MCF 10A (cell line): ENCODE measurements at regions of chr5 and their contacts with region 1.

Region 1: GRCh38 chr5:138503487-138504270 is 38.4 kb downstream of the EGR1 start:
- DNase-seq: peak; percentile 86
- H3K4me3 Mint-ChIP-seq: no peak overlapping the region
- H3K27ac Mint-ChIP-seq: no peak overlapping the region
- H3K4me1 Mint-ChIP-seq: peaks cover 58% of the 10 kb centered on the region
- H3K27me3 Mint-ChIP-seq: no peaks in the 10 kb centered on the region
- CTCF ChIP-seq: peak; percentile 79

Region 2: GRCh38 chr5:137870647-137871339 is 632.9 kb before region 1 on chr5:
- CTCF ChIA-PET with region 1: no interaction called
- POLR2A ChIA-PET with region 1: no interaction called
- intact Hi-C with region 1: no loop called
- DNase-seq: no peak
- H3K4me3 Mint-ChIP-seq: no peak overlapping the region
- H3K27ac Mint-ChIP-seq: no peak overlapping the region
- H3K4me1 Mint-ChIP-seq: no peaks in the 10 kb centered on the region
- H3K27me3 Mint-ChIP-seq: no peaks in the 10 kb centered on the region
- CTCF ChIP-seq: no peak

Region 3: DNA sequence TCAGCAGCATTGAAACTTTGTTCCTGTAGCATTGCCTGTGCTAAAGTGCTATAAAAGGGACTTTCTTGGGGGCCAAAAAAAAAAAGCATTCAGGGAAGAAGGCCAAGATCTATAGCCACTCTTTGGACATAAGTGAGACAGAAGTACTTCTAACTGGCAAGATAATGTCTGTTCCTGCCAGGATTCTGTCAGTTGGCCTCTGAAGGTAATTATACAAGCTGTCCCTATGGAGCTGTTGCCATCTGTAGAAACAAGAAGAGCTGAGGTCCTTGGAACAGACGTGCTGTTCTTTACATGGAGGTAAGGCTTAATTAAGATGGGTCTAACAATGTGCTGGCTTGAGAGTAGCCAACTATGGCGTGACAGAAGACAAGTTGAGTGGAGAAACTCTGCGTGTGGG is 315.1 kb before region 1 on chr5:
- CTCF ChIA-PET with region 1: no interaction called
- POLR2A ChIA-PET with region 1: no interaction called
- intact Hi-C with region 1: no loop called
- DNase-seq: no peak
- H3K4me3 Mint-ChIP-seq: no peak overlapping the region
- H3K27ac Mint-ChIP-seq: no peak overlapping the region
- H3K4me1 Mint-ChIP-seq: no peaks in the 10 kb centered on the region
- H3K27me3 Mint-ChIP-seq: no peaks in the 10 kb centered on the region
- CTCF ChIP-seq: no peak

Region 4: DNA sequence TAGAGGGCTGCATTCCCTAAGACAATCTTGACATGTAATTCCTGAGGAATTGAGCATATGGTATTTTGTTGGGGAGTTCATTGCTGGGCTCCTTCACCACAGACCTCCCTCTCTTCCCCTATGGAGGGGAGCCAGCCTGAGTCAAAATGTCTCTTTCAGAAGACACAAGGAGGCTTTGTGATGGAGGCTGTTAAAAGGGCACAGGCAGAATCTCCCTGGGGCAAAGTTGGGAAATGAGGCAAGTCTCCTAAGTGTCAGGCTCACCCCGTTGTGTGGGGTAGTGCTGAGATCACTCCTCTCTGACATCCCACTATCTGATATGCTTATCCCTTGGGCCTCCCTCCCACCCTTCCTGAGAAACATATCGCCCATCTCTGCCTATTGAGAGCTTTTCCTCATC is 259.9 kb before region 1 on chr5:
- CTCF ChIA-PET with region 1: no interaction called
- POLR2A ChIA-PET with region 1: no interaction called
- intact Hi-C with region 1: no loop called
- DNase-seq: no peak
- H3K4me3 Mint-ChIP-seq: no peak overlapping the region
- H3K27ac Mint-ChIP-seq: no peak overlapping the region
- H3K4me1 Mint-ChIP-seq: no peaks in the 10 kb centered on the region
- H3K27me3 Mint-ChIP-seq: peaks cover 61% of the 10 kb centered on the region
- CTCF ChIP-seq: no peak

Region 5: GRCh38 chr5:138464008-138464387 is 39.7 kb before region 1 on chr5:
- CTCF ChIA-PET with region 1: interaction called, 268 read pairs
- POLR2A ChIA-PET with region 1: interaction called, 626 read pairs
- intact Hi-C with region 1: loop called (anchors 1 kb)
- DNase-seq: peak; percentile 98
- H3K4me3 Mint-ChIP-seq: peak overlapping the region; percentile 78
- H3K27ac Mint-ChIP-seq: peak overlapping the region; percentile 93
- H3K4me1 Mint-ChIP-seq: peaks cover 45% of the 10 kb centered on the region
- H3K27me3 Mint-ChIP-seq: peaks cover 20% of the 10 kb centered on the region
- CTCF ChIP-seq: peak; percentile 97

Region 6: DNA sequence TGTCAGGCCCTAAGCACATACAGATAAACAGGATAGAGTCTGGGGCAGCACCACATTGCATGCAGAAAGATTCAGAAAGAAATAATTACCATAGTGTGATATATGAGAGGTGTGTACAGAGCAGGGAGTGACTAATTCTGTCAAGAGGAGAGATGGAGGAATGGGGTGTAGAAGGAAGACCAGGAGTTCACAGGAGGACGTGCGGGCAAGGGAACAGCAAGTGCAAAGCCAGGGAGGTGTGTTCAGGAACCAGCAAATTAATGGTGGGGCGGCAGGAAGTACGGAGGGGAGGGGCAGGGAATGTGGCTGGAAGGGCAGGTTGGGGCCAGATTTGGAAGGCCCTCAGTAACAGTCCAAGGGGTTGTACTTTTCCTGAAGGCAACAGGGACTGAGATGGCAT is 21.0 kb before region 1 on chr5:
- CTCF ChIA-PET with region 1: interaction called, 14 read pairs
- POLR2A ChIA-PET with region 1: interaction called, 6 read pairs
- intact Hi-C with region 1: no loop called
- DNase-seq: peak; percentile 59
- H3K4me3 Mint-ChIP-seq: no peak overlapping the region
- H3K27ac Mint-ChIP-seq: peak overlapping the region; percentile 2
- H3K4me1 Mint-ChIP-seq: peaks cover 17% of the 10 kb centered on the region
- H3K27me3 Mint-ChIP-seq: no peaks in the 10 kb centered on the region
- CTCF ChIP-seq: no peak

Region 7: DNA sequence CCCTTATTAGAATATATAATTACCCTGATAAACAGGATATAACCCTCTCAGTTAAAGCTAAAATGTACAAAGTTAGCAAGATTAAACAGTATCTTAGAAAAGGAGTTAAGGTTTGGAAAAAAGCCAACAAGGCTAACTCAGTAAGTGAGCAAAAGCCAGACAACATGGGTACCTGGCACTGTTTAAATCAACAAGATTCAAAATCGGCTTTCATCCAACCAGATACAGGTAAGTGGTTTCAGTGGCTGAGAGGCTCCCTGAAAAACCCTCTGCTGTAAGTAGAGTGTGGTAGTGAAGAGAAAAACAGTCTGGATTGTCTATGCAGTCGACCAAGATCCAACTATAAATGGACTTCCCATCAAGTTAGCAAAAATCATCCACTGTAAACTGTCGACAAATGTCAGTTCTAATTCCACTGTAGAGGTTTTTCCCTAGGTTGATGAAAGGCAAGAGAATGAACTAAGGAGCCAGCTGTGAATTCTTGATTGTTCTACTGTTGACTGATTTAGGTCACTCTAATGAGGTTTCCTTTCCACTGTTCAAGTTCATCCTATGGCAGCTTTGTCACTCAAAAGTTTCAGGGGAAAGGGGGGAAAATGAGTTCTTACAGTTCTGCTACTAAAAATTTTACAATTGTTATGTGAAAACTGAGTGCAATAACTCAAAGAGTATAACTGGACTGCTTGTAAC is 12.0 kb after region 1 on chr5:
- CTCF ChIA-PET with region 1: interaction called, 55 read pairs
- POLR2A ChIA-PET with region 1: interaction called, 23 read pairs
- intact Hi-C with region 1: no loop called
- DNase-seq: no peak
- H3K4me3 Mint-ChIP-seq: no peak overlapping the region
- H3K27ac Mint-ChIP-seq: peak overlapping the region; percentile 59
- H3K4me1 Mint-ChIP-seq: peaks cover 15% of the 10 kb centered on the region
- H3K27me3 Mint-ChIP-seq: no peaks in the 10 kb centered on the region
- CTCF ChIP-seq: no peak

Region 8: DNA sequence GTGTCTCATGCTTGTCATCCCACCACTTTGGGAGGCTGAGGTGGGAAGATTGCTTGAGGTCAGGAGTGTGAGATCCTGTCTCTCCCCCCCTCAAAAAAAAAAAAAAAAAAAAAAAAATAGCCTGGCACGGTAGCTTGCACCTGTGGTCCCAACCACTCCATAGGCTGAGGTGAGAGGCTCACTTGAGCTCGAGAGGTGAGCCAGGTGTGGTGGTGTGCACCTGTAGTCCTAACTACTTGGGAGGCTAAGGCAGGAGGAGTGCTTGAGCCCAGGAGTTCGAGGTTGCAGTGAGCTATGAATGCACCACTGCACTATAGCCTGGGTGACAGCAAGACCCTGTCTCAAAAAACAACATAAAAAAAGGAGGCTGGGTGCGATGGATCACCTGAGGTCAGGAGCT is 49.0 kb after region 1 on chr5:
- CTCF ChIA-PET with region 1: interaction called, 124 read pairs
- POLR2A ChIA-PET with region 1: interaction called, 276 read pairs
- intact Hi-C with region 1: no loop called
- DNase-seq: no peak
- H3K4me3 Mint-ChIP-seq: no peak overlapping the region
- H3K27ac Mint-ChIP-seq: no peak overlapping the region
- H3K4me1 Mint-ChIP-seq: peaks cover 10% of the 10 kb centered on the region
- H3K27me3 Mint-ChIP-seq: no peaks in the 10 kb centered on the region
- CTCF ChIP-seq: no peak